ENCODE measurements at regions of chr1 and their contacts with region 1.

Region 1: GRCh38 chr1:159936273-159936904 is 9.0 kb downstream of the IGSF9 start:
- DNase-seq: peak; percentile 61
- H3K4me3 ChIP-seq: no peak overlapping the region
- H3K27ac ChIP-seq: no peak overlapping the region
- H3K4me1 ChIP-seq: no peaks in the 10 kb centered on the region
- H3K27me3 ChIP-seq: no peaks in the 10 kb centered on the region

Region 2: DNA sequence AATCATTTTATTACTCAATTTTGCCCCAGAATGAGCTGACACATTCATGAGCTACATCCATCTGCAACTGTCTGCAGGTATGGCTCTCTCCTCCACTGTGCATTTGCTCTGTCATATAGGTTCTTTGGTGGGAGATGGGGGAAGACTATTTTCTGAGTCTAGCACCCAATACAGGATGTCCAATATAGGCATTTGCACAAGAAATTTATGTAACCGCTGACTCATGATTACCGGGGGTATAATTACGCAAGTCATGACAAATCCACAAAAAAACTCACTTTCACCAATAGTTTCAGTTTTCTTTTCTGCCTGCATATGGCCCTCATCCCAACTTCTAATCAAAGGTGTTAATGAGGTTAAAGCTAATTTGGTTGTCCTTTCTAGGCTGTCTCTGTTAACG is 56.4 kb before region 1 on chr1:
- in situ Hi-C with region 1: no loop called
- DNase-seq: peak; percentile 89
- H3K4me3 ChIP-seq: 0 out of 2 replicates have a peak overlapping the region, but pooled peaks have one; percentile 2
- H3K27ac ChIP-seq: peak overlapping the region; percentile 48
- H3K4me1 ChIP-seq: peaks cover 36% of the 10 kb centered on the region
- H3K27me3 ChIP-seq: no peaks in the 10 kb centered on the region

Region 3: GRCh38 chr1:160006312-160006940 is 70.0 kb after region 1 on chr1:
- in situ Hi-C with region 1: loop called (anchors 5 kb)
- DNase-seq: peak; percentile 81
- H3K4me3 ChIP-seq: no peak overlapping the region
- H3K27ac ChIP-seq: no peak overlapping the region
- H3K4me1 ChIP-seq: no peaks in the 10 kb centered on the region
- H3K27me3 ChIP-seq: no peaks in the 10 kb centered on the region

Region 4: DNA sequence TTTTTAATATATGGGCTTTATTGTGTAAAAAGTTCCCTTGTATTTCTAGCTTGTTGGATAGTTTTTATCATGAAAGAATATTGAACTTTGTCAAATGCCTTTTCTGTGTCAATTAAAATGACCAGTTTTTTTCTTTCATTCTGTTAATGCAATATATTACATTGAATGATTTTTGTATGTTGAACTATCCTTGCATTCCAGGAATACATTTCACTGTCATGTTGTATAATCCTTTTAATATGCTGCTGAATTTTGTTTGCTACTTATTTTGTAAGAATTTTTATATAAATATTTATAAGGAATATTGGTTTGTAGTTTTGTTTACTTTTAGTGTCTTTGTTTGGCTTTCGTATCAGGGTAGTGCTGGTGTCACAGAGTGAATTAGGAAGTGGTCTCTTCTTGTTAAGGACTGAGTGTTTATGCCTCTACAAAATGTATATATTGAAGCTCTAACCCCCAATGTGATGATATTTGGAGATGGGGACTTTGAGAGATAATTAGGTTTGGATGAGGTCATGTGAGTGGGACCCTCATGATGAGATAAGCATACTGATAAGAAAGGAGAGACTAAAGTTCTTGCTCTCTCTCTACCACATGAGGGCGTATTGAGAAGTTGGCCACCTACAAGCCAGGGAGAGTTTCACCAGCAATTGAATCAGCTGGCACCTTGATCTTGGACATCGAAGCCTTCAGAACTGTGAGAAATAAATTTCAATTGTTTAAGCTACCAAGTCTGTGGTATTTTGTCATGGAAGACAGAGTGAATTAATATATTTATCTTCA is 598.6 kb after region 1 on chr1:
- in situ Hi-C with region 1: no loop called
- DNase-seq: no peak
- H3K4me3 ChIP-seq: no peak overlapping the region
- H3K27ac ChIP-seq: no peak overlapping the region
- H3K4me1 ChIP-seq: no peaks in the 10 kb centered on the region
- H3K27me3 ChIP-seq: no peaks in the 10 kb centered on the region

Measured in GM23248 (cell line).